Activated T-helper 1 cell treated with anti-CD3 and anti-CD28 coated beads, Interleukin-12 subunit alpha, Interleukin-12 subunit beta, Interleukin-2, Interleukin-4 antibody, amounts not matched to agents 30 ng/mL and 10 ng/mL and 1 ng/mL, durations not matched to agents 14 hours and 24 hours and 36 hours (primary cell): ENCODE measurements at regions of chr19 and their contacts with region 1.

Region 1: DNA sequence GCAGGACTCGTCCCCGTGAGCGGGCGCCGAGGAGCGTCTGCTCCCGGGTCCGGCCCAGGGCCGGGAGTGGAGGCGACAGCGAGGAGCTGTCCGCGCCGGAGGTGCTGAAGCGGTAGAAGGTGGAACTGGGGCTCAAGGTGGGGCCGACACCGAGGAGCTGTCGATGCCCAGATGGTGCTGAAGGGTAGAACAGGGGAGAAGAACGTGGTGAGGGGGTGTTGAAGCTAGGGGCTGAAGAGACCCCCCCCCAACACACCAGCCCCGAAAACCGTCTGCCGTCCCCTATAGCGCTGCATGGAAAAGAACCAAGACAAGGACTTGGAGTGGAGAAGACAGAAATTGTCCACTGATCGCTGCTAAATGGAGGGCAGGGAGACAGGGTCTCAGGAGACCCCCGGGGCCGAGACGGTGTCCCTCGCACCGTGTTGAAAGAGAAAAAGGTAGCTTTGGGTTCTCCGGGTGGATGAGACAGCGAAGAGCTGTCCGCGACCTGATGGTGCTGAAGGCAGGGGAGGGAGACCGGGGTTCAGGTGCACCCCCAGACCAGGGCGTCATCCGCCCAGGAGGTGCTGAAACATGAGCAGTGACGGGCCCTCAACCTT is 7.1 kb upstream of the PDE4C start:
- DNase-seq: peak; percentile 48
- H3K4me3 Mint-ChIP-seq: no peak overlapping the region
- H3K27ac Mint-ChIP-seq: no peak overlapping the region
- H3K4me1 Mint-ChIP-seq: peaks cover 9% of the 10 kb centered on the region
- H3K27me3 Mint-ChIP-seq: peaks cover 44% of the 10 kb centered on the region

Region 2: GRCh38 chr19:18251587-18252369 is 18.5 kb after region 1 on chr19:
- intact Hi-C with region 1: loop called (anchors 1 kb)
- DNase-seq: peak; percentile 66
- H3K4me3 Mint-ChIP-seq: no peak overlapping the region
- H3K27ac Mint-ChIP-seq: peak overlapping the region; percentile 18
- H3K4me1 Mint-ChIP-seq: no peaks in the 10 kb centered on the region
- H3K27me3 Mint-ChIP-seq: peaks cover 16% of the 10 kb centered on the region

Region 3: DNA sequence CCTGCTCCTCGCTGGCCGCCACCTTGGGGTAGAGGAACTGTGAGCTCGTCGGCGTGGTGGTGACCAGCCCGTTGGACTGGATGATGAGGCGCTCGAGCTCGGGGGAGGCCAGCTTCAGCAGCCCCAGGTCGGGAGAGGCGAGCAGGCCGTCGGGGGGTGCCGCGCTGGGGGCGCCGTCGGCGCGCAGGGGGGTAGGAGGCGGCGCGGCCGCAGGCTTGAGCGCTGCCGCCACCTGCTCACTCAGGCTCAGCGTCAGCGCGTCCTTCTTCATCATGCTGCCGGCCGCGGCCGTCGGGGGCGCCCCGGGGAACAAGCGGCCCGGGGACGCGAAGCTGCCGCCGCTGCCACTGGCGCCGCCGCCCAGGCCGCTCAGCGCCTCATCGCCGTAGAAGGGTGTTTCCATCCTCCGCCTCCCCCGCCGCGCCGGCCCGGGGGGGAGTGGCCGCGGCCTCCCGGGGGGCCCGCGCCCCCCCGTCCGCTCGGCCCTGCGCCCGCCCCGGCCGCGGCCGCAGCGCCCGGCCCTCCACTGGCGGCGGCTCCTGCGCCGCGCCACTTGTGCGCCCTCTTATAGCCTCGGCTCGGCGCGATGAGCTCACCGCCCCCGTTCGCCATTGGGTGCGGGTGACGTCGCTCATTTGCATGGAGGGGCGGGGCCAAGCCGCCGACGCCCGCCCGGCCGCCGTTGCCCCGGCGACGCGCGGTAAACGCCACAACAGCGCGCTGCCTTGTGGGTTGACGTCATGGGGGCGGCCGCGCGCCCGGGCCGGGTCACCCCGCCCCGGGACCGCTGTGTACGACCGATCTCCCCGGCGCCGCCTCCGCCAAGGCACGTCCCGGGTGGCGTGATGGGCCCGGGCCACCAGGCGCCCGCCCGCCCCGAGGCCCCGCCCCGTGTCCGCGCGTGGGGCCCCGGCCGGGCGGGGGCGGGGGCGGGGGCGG is 48.0 kb after region 1 on chr19 and contains the start of gene JUND:
- intact Hi-C with region 1: no loop called
- DNase-seq: peak; percentile 98
- H3K4me3 Mint-ChIP-seq: peak within 1 kb of the TSS; percentile 88
- H3K27ac Mint-ChIP-seq: peak within 1 kb of the TSS; percentile 98
- H3K4me1 Mint-ChIP-seq: peaks cover 49% of the 10 kb centered on the region
- H3K27me3 Mint-ChIP-seq: no peaks in the 10 kb centered on the region
- total RNA-seq, gene JUND: 431 and 455 TPM in 2 replicates